ENCODE measurements at regions of chr3 and their contacts with region 1.

Region 1: GRCh38 chr3:13452490-13453335 is 27.4 kb upstream of the HDAC11 start:
- DNase-seq: peak; percentile 63 to 79 (median 74)
- H3K4me3 ChIP-seq: peak overlapping the region in 6 of 7 experiments; percentile 42 to 87 (median 76)
- H3K27ac ChIP-seq: no peak overlapping the region
- H3K4me1 ChIP-seq: peaks cover 6 to 18% (median 14%) of the 10 kb centered on the region in 4 experiments
- H3K27me3 ChIP-seq: no peaks in the 10 kb centered on the region

Region 2: GRCh38 chr3:13091898-13092611 is 360.7 kb before region 1 on chr3:
- CTCF ChIA-PET with region 1: interaction called, 25 read pairs
- POLR2A ChIA-PET with region 1: no interaction called
- DNase-seq: peak; percentile 72 to 85 (median 76)
- H3K4me3 ChIP-seq: no peak overlapping the region
- H3K27ac ChIP-seq: no peak overlapping the region
- H3K4me1 ChIP-seq: peaks cover 0 to 33% (median 30%) of the 10 kb centered on the region in 4 experiments
- H3K27me3 ChIP-seq: no peaks in the 10 kb centered on the region

Region 3: GRCh38 chr3:13296662-13297061 is 156.1 kb before region 1 on chr3:
- CTCF ChIA-PET with region 1: no interaction called
- POLR2A ChIA-PET with region 1: no interaction called
- DNase-seq: peak; percentile 54 to 85 (median 80)
- H3K4me3 ChIP-seq: no peak overlapping the region
- H3K27ac ChIP-seq: no peak overlapping the region
- H3K4me1 ChIP-seq: peaks cover 5 to 78% (median 26%) of the 10 kb centered on the region in 4 experiments
- H3K27me3 ChIP-seq: no peaks in the 10 kb centered on the region

Region 4: DNA sequence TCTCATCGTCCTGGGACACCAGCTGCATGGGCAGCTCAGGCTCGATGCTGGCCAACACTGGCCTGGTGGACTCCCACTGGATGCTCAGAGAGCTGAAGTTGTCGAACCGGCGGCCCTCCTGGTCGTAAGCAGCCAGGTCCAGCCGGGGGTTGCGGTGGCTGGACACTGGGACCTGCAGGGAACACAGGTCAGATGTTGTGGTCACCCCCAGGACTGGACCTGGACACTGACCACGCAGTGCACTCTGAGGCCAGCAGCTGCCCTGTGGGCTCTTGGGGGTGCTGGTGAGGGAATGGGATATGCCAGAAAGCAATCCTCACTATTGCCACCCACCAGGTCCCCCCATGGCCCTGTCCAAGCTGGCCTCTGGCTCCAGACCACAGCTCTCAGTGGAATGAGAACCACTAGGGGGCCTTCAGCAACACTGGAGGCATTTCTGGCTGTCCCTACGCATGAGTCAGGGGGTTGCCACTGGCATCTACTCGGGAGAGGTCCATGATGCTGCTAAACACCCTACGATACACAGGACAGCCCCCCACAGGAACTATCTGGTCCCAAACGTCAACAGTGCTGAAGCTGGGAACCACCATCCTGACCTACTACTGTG is 98.7 kb before region 1 on chr3:
- CTCF ChIA-PET with region 1: interaction called, 69 read pairs
- POLR2A ChIA-PET with region 1: no interaction called
- DNase-seq: peak in 2 of 3 donors; percentile 42 to 43
- H3K4me3 ChIP-seq: no peak overlapping the region
- H3K27ac ChIP-seq: peak overlapping the region; percentile 21 to 90
- H3K4me1 ChIP-seq: peaks cover 3 to 39% (median 31%) of the 10 kb centered on the region in 4 experiments
- H3K27me3 ChIP-seq: no peaks in the 10 kb centered on the region

Region 5: GRCh38 chr3:13391308-13391707 is 61.4 kb before region 1 on chr3:
- CTCF ChIA-PET with region 1: interaction called, 51 read pairs
- POLR2A ChIA-PET with region 1: no interaction called
- DNase-seq: peak in 1 of 3 donors; percentile 8
- H3K4me3 ChIP-seq: no peak overlapping the region
- H3K27ac ChIP-seq: no peak overlapping the region
- H3K4me1 ChIP-seq: no peaks in the 10 kb centered on the region
- H3K27me3 ChIP-seq: no peaks in the 10 kb centered on the region

Region 6: DNA sequence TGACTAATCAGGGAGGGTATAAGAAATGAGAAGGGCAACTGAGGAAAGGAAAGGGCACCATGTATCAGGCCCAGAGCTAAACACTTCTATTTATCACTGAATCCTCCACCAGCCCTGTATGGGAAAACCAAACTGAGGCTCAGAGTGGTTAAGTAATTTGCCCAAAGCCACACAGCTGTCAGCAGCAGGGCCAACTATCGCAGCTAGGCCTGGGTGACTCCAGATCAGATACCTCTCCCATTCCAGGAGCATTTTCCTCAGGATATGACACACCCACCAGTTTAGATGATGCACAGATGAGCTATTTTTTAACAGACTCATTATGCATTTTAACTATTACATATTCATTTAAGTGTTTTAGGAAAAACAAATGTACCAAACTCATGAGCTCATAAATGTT is 47.1 kb before region 1 on chr3:
- CTCF ChIA-PET with region 1: interaction called, 11 read pairs
- POLR2A ChIA-PET with region 1: no interaction called
- DNase-seq: no peak
- H3K4me3 ChIP-seq: no peak overlapping the region
- H3K27ac ChIP-seq: no peak overlapping the region
- H3K4me1 ChIP-seq: peaks cover 0 to 13% (median 11%) of the 10 kb centered on the region in 4 experiments
- H3K27me3 ChIP-seq: no peaks in the 10 kb centered on the region

Region 7: DNA sequence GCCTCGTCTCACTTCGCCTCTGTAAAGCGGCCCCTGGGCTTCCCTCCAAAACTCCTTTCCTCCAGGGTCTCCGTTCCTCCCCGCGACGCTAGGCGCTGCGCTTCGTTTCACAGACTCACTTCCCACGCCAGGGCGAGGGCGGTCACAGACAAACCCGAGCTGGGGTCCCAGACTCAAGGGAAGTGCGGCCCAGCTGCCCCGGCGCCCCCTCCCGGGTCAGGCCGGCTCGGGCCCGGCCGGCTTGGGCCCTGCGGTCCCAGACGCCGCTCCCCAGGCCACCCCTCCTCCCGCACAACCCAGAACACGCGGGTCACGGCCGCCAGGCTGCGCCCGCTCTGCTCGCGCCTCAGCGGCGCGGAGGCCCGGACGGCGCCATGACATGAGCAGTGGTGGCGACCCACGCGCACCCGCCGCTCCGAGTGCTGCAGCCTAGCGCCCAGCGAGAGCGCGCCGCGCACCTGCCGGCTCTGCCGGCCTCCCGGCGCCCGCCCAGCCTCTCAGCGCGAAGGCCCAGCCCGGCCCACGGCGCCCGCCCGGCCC is 33.1 kb before region 1 on chr3:
- CTCF ChIA-PET with region 1: interaction called, 45 read pairs
- POLR2A ChIA-PET with region 1: interaction called, 4 read pairs
- DNase-seq: peak; percentile 67 to 76 (median 69)
- H3K4me3 ChIP-seq: peak overlapping the region; percentile 23 to 83 (median 71)
- H3K27ac ChIP-seq: peak overlapping the region; percentile 25 to 85
- H3K4me1 ChIP-seq: peaks cover 19 to 70% (median 62%) of the 10 kb centered on the region in 4 experiments
- H3K27me3 ChIP-seq: no peaks in the 10 kb centered on the region

Region 8: DNA sequence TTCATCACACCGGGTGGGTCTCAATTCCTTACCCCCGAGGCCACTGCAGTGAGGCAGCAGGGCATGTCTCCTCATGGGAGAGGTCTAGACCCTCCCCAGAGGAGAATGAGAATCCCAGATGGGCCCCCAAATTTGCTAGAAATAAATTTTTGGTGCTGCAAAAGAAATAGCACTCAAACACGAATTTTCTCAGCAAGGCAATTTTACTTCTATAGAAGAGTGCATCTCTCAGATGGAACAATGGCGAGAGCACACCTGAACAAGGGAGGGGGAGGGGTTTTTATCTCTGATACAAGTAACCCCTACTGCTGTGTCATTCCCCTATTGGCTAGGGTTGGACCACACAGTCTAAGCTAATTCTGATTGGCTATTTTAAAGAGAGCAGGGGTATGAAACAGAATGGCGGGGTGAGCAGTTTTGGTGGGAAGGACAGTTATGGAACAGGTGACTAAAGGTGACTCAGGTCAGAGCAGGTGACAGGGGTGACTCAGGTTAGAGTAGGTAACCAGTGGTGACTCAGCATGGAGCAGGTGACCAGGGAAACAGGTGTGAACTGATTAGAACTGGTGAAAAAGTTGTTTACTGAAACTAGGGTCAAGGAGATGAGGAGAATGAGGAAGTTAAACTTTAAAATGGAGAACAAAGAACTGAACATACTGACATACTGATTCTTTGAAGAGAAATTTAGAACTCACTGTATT is 520.1 kb after region 1 on chr3:
- CTCF ChIA-PET with region 1: no interaction called
- POLR2A ChIA-PET with region 1: no interaction called
- DNase-seq: peak in 2 of 3 donors; percentile 3 to 28
- H3K4me3 ChIP-seq: no peak overlapping the region
- H3K27ac ChIP-seq: no peak overlapping the region
- H3K4me1 ChIP-seq: no peaks in the 10 kb centered on the region
- H3K27me3 ChIP-seq: no peaks in the 10 kb centered on the region